ENCODE measurements at regions of chr6 and their contacts with region 1.

Region 1: GRCh38 chr6:42217519-42218367 is at the start of gene MRPS10:
- DNase-seq: peak; percentile 90
- H3K4me3 ChIP-seq: peak within 1 kb of the TSS; percentile 78 to 100 (median 80)
- H3K27ac ChIP-seq: peak within 1 kb of the TSS; percentile 83
- H3K4me1 ChIP-seq: peaks cover 27% of the 10 kb centered on the region
- H3K27me3 ChIP-seq: no peaks in the 10 kb centered on the region
- CTCF ChIP-seq: no peak
- total RNA-seq, gene MRPS10: 41.2 to 50.9 TPM

Region 2: DNA sequence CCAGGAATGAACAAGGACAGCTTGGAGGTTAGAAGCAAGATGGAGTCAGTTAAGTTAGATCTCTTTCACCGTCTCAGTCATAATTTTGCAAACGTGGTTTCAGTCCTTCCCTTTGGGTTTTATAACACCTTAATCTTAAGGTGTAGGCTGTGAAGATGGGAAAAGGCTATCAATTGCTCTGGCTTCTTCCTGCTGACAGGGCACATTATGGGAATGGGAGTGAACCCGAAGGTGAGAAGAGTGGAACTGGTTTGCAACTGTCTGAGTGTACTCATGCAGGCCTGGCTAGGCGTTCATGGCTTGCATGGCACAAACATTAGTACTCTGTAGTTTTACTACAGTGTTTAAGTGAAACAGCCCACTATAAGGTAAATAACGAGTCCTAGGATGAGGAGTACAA is 158.0 kb before region 1 on chr6:
- CTCF ChIA-PET with region 1: no interaction called
- dilution Hi-C with region 1: no loop called
- in situ Hi-C with region 1: no loop called
- intact Hi-C with region 1: no loop called
- DNase-seq: no peak
- H3K4me3 ChIP-seq: no peak overlapping the region
- H3K27ac ChIP-seq: no peak overlapping the region
- H3K4me1 ChIP-seq: no peaks in the 10 kb centered on the region
- H3K27me3 ChIP-seq: no peaks in the 10 kb centered on the region
- CTCF ChIP-seq: no peak

Region 3: DNA sequence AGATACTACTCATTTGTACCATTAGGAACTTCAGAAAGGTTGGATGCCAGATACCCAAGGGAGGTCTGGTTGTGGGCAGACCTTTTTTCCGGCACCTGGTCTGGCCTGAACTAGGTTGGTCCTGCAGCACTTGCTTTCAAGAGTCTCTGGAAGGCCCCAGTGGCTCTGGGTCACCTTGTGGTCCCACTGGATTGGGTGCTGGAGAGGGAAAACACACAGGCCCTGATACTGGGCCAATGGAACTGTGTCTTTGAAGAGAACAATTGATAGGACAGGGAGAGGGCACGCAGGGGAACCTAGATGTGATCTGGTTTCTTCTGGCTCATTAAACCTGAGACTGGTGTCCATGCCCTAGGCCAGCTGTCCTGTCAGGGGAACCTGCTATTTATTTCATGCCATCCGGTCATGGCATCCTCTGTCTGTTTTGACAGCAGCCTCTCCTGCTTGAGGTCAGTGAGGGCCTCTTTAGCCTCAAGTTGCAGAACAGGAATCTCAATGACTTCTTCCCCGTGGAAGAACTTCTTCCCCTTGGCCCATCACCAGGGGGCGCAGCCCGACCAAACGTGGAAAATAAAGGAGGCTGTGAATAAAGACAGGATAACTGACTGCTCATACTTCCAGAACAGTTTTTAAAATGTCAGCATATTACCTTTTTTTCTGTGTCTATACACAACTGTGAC is 142.4 kb before region 1 on chr6:
- CTCF ChIA-PET with region 1: no interaction called
- dilution Hi-C with region 1: no loop called
- in situ Hi-C with region 1: loop called in 1 of 2 experiments (anchors 5 kb)
- intact Hi-C with region 1: loop called (anchors 1 kb)
- DNase-seq: peak; percentile 67
- H3K4me3 ChIP-seq: no peak overlapping the region
- H3K27ac ChIP-seq: no peak overlapping the region
- H3K4me1 ChIP-seq: no peaks in the 10 kb centered on the region
- H3K27me3 ChIP-seq: no peaks in the 10 kb centered on the region
- CTCF ChIP-seq: peak; percentile 91 to 94

Region 4: GRCh38 chr6:42230345-42231321 is 12.9 kb after region 1 on chr6:
- CTCF ChIA-PET with region 1: no interaction called
- dilution Hi-C with region 1: no loop called
- in situ Hi-C with region 1: no loop called
- intact Hi-C with region 1: loop called (anchors 1 kb)
- DNase-seq: no peak
- H3K4me3 ChIP-seq: no peak overlapping the region
- H3K27ac ChIP-seq: peak overlapping the region; percentile 45
- H3K4me1 ChIP-seq: peaks cover 38% of the 10 kb centered on the region
- H3K27me3 ChIP-seq: no peaks in the 10 kb centered on the region
- CTCF ChIP-seq: peak; percentile 68 to 69

Measured in mammary epithelial cell (primary cell).